Sigmoid colon (tissue), 7 donors: ENCODE measurements at regions of chr2 and their contacts with region 1.

Region 1: DNA sequence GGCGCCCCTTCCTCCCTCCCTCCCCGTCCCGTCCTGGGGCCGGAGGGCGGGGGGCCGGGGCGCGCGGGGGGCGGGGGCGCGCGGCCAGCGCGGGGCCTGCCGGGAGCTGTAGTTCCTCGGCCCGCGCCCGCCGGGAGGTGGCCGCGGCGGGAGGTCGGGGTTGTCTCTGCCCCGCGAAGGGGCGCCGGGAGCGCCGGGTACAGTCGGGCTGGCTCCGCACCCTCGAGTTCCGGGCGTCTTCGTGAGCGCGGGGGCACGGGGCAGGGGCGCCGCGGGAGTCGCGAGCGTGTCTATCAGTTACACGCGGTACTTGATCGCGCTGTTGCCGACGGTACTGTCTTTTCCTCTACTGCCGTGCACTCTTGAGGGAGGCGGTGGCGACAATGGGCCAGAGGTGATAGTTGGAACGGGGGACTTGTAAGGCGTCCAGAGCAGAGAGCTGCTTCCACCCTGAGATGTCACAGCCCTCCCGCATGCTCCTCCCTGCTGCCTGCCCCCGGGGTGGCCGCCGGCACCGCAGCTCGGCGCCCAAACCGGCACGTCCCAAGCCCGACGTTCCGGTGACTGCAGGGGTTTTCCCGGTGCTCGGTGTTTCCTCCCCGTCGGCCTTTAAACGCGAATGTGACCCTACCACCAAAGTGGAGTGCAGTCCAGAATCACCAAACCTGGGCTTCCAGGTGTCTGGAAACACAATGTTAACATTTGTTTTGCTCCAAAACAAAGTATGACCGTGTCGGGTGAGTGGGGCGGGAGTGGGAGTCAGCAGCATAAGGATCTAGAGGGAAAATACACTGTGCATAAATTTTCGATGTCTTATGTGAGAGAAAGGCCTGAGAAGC is at the start of gene PRKD3:
- DNase-seq: peak; percentile 80
- H3K4me3 ChIP-seq: peak within 1 kb of the TSS; percentile 66 to 98 (median 86)
- H3K27ac ChIP-seq: peak within 1 kb of the TSS; percentile 86 to 96 (median 95)
- H3K4me1 ChIP-seq: peaks cover 0 to 46% (median 36%) of the 10 kb centered on the region in 4 donors
- H3K27me3 ChIP-seq: no peaks in the 10 kb centered on the region
- CTCF ChIP-seq: no peak
- EP300 ChIP-seq: no peak
- POLR2A ChIP-seq: peak; percentile 12 to 31
- total RNA-seq, gene PRKD3: 53.9 to 78.8 (median 71.9) TPM

Region 2: DNA sequence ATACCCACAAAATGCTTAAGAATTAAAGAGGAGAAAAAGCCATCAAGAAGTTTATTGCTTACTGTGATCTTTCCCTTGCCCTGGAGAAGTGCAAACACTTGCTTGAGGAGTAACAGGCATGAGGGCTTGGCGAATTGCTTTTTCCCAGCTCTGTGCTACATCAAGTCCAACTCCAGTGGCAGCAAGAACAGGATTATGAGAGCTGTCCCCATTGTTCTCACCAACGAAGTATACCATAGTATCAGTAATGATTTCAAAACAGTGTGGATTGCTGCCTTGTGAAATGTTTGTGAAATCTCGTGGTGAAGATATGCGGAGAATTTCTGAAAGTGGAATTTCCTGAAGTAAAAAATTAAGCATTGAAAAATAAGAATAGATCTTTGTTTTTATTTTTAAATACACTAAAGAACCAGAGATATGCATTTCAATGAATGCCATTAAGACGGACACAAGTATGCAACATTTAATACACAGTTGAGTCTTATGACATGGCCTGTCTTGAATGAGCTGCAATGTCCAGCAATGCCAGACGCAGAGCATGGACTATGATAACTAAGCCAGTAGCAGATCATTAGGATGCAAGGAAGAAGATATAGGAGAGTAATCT is 50.5 kb before region 1 on chr2:
- intact Hi-C with region 1: loop called (anchors 5 kb)
- DNase-seq: peak; percentile 74
- H3K4me3 ChIP-seq: no peak overlapping the region
- H3K27ac ChIP-seq: peak overlapping the region in 3 of 4 donors; percentile 32 to 74 (median 64)
- H3K4me1 ChIP-seq: peaks cover 0 to 39% (median 17%) of the 10 kb centered on the region in 4 donors
- H3K27me3 ChIP-seq: no peaks in the 10 kb centered on the region
- CTCF ChIP-seq: no peak
- EP300 ChIP-seq: peak in 2 of 4 donors; percentile 28 to 72
- POLR2A ChIP-seq: no peak

Region 3: DNA sequence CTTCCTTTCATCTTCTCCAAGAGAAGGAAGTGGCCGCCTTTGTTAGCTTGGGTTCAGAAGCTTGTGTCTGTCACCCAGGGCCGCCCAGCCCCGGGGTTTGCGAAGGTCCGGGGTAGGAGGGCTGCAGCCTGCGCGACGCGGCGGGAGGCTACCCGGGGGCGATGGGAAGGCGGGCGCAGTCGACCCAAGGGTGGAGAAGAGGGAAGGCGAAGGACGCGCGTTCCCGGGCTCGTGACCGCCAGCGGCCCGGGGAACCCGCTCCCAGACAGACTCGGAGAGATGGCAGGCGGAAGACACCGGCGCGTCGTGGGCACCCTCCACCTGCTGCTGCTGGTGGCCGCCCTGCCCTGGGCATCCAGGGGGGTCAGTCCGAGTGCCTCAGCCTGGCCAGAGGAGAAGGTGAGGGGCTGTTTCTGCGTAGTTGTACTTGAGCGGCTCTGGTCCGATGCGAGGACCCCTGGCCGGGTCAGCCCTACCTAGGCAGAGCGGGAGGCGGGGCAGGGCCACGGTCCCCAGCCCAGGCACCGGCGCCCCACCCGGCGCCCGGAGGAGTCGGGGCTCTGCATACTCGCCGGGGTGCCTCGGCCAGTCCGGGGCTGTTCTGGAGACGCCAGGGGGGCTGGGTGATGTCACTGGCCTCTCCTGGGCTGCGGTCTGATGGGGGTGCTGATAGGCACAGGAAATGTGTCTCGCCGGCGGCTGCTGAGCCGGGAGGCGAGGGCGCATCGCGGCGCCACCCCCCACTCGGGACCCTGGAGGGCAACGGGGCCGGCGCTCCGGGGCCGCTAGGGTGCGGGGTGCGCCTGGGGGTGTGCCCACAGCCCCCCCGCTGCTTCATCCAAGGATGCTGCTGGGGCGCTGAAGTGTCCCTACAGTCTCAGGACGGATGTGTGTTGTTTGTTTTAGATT is 19.7 kb after region 1 on chr2 and contains the start of gene QPCT:
- intact Hi-C with region 1: loop called (anchors 2 kb)
- DNase-seq: peak; percentile 87
- H3K4me3 ChIP-seq: peak within 1 kb of the TSS; percentile 63 to 77 (median 70)
- H3K27ac ChIP-seq: peak within 1 kb of the TSS in 3 of 4 donors; percentile 85 to 95 (median 85)
- H3K4me1 ChIP-seq: peaks cover 0 to 39% (median 22%) of the 10 kb centered on the region in 4 donors
- H3K27me3 ChIP-seq: no peaks in the 10 kb centered on the region
- CTCF ChIP-seq: no peak
- EP300 ChIP-seq: no peak
- POLR2A ChIP-seq: peak in 1 of 2 donors; percentile 26
- total RNA-seq, gene QPCT: 65.8 to 94.9 (median 75.0) TPM

Region 4: GRCh38 chr2:37376421-37377186 is 51.6 kb after region 1 on chr2:
- intact Hi-C with region 1: loop called (anchors 5 kb)
- DNase-seq: peak; percentile 95
- H3K4me3 ChIP-seq: peak overlapping the region in 3 of 4 donors; percentile 1 to 15 (median 11)
- H3K27ac ChIP-seq: peak overlapping the region; percentile 53 to 87 (median 78)
- H3K4me1 ChIP-seq: peaks cover 0 to 65% (median 53%) of the 10 kb centered on the region in 4 donors
- H3K27me3 ChIP-seq: no peaks in the 10 kb centered on the region
- CTCF ChIP-seq: no peak
- EP300 ChIP-seq: peak; percentile 85 to 98 (median 96)
- POLR2A ChIP-seq: no peak